GM12878 (cell line): ENCODE measurements at regions of chr9 and their contacts with region 1.

Region 1: GRCh38 chr9:89096807-89097206 is 81.8 kb downstream of the SHC3 start:
- DNase-seq: no peak
- ATAC-seq: no peak
- H3K4me3 ChIP-seq: no peak overlapping the region
- H3K27ac ChIP-seq: no peak overlapping the region
- H3K4me1 ChIP-seq: no peaks in the 10 kb centered on the region
- H3K27me3 ChIP-seq: no peaks in the 10 kb centered on the region
- CTCF ChIP-seq: no peak
- EP300 ChIP-seq: no peak
- POLR2A ChIP-seq: no peak
- RAD21 ChIP-seq: no peak

Region 2: DNA sequence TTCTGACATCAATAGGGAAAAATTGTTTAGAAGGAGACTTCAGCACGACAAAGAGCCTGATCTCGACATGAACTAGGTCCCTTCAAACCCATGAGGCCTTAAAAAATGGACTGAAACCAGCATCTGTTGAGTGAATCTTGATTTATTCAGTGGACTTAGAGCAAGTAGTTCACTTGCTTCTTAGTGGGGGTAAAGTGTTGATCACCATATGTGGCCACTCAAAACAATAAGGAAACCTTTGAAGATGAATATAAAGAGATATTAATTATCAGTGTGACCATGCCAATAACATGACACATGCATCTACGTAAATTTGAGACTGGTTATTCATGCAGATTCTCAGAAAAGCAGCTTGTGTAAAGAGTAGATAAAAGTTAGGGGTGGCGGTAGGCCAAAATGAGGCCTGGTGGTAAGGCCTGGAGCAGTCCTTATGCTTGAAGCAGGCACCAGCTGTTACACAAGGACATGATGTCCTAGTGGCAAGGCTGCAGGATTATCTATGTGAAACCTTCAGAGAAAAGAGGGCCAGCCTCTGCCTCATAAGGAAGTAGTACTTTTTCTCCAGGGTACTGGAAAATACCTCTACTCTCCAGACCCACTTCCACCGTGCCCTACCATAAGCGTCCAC is 44.2 kb before region 1 on chr9:
- CTCF ChIA-PET with region 1: no interaction called
- POLR2A ChIA-PET with region 1: no interaction called
- RAD21 ChIA-PET with region 1: no interaction called
- SMC1A ChIA-PET with region 1: no interaction called
- in situ Hi-C with region 1: no loop called
- intact Hi-C with region 1: no loop called
- DNase-seq: no peak
- ATAC-seq: no peak
- H3K4me3 ChIP-seq: no peak overlapping the region
- H3K27ac ChIP-seq: no peak overlapping the region
- H3K4me1 ChIP-seq: no peaks in the 10 kb centered on the region
- H3K27me3 ChIP-seq: no peaks in the 10 kb centered on the region
- CTCF ChIP-seq: no peak
- EP300 ChIP-seq: no peak
- POLR2A ChIP-seq: no peak
- RAD21 ChIP-seq: no peak

Region 3: DNA sequence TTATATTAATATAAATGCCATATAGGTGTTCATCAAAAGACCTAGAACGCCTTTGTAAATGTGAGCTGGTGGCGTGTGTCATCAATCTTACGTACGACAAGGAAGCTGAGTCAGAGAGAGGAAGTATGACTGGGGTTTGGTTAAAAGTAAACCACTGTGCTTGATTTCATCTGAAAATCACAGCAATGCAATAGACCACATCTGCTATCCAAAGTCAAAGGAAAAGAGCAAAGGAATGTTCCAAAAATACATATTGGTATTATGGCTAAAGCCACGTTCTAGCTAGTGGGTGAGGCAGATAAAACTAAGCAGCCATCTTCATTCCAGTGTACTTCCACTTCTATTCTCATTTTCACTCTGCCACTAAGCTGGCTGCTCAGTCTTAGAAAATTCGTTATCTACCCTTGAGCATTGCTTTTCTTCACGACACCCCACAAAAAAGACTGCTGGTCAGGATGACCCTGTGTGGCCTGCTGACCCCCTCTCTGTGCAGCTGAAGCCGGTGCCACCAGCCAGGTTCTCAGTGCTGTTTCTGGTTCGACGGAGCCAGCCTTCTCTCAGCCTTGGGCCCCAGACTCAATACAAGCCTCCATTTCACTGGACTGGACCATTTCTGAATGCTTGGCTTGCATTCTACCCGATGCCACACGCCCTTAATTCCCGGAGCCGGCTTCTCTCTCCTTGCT is 58.0 kb after region 1 on chr9:
- CTCF ChIA-PET with region 1: no interaction called
- POLR2A ChIA-PET with region 1: no interaction called
- RAD21 ChIA-PET with region 1: no interaction called
- SMC1A ChIA-PET with region 1: no interaction called
- in situ Hi-C with region 1: loop called (anchors 10 kb)
- intact Hi-C with region 1: no loop called
- DNase-seq: no peak
- ATAC-seq: no peak
- H3K4me3 ChIP-seq: no peak overlapping the region
- H3K27ac ChIP-seq: no peak overlapping the region
- H3K4me1 ChIP-seq: no peaks in the 10 kb centered on the region
- H3K27me3 ChIP-seq: 0 out of 4 replicates have a peak, but pooled peaks cover 0 to 2% of the 10 kb centered on the region in 2 experiments
- CTCF ChIP-seq: no peak
- EP300 ChIP-seq: no peak
- POLR2A ChIP-seq: no peak
- RAD21 ChIP-seq: no peak

Region 4: GRCh38 chr9:89448381-89448780 is 351.6 kb after region 1 on chr9:
- CTCF ChIA-PET with region 1: no interaction called
- POLR2A ChIA-PET with region 1: no interaction called
- RAD21 ChIA-PET with region 1: no interaction called
- SMC1A ChIA-PET with region 1: no interaction called
- in situ Hi-C with region 1: no loop called
- intact Hi-C with region 1: no loop called
- DNase-seq: no peak
- ATAC-seq: peak; percentile 71
- H3K4me3 ChIP-seq: no peak overlapping the region
- H3K27ac ChIP-seq: no peak overlapping the region; the same call in 1 of the 2 replicates
- H3K4me1 ChIP-seq: peaks cover 20% of the 10 kb centered on the region
- H3K27me3 ChIP-seq: no peaks in the 10 kb centered on the region
- CTCF ChIP-seq: no peak
- EP300 ChIP-seq: no peak
- POLR2A ChIP-seq: peak; percentile 10; the same call in 1 of the 2 replicates
- RAD21 ChIP-seq: no peak